Posterior vena cava (tissue), 2 donors: ENCODE measurements at regions of chr7 and their contacts with region 1.

Region 1: DNA sequence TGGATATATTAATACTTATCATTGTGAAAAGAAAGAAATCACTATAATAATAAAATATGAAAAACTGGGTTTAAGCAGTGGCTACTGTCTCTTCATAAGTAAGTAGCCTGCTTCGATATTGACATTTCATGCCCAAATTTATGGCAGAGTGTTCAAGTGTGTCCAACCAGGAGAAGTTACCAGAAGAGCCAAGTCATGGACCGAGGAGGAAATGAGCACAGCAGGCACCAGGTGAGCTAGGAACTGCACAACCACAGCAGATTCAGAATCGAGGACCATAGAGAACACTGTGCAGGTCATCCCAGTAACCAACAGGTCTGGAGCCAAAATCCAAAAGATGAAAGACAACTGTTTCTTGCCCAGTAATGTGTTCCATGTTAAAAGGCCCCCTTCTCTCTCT is 79.9 kb upstream of the ABCB5 start:
- DNase-seq: no peak

Region 2: DNA sequence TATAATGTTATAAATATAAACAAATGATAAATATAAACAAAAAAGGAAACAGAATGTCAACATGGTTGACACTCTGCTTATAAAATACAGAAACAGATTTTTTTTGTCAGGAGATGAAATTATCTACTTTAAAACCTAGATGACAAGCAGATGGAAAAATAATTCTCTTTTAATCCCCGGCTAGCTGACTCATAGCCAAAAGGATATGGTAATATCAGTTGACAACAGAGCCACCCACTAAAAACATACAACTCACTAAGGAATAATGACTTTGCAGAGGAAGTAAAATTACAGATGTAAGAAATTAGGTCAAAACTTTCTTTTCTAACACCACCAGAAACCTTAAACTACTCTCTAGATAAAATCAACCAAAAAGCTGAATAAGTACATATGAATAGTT is 51.2 kb before region 1 on chr7:
- intact Hi-C with region 1: loop called in 1 of 2 experiments (anchors 1 kb)
- DNase-seq: no peak

Region 3: DNA sequence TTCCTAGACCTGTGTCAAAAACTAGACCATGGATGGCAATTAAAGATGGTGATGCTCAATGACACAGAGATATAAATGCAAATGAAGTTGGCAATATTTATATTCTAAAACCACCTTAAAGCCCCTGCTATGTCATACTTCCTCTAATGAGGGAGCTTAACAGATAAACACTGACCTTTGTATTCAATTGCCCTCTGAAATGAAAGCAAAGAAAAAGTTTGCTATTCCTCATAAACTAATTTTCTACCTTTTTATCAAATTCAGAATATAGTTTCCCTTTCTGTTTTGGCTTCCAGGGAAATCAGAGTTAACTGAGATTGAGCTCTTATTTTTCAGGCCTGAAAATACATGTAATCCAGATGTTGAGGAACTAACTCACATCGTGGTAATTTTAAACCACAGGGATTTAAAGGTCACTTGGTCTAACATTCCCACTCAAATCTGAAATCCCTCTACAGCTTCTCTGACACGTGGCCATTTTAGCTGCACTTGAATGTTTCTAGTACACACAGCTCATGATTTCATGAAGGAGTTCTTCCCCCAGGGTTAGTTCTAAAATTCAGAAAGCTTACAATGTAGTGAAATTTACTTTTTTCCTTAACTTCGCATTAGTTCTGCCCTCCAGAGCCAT is 42.0 kb after region 1 on chr7:
- intact Hi-C with region 1: no loop called
- DNase-seq: no peak